ENCODE measurements at regions of chr2 and their contacts with region 1.

Region 1: GRCh38 chr2:88212251-88212790 is 42.2 kb downstream of the THNSL2 start:
- DNase-seq: peak; percentile 60

Region 2: GRCh38 chr2:86617153-86617552 is 1595.2 kb before region 1 on chr2:
- intact Hi-C with region 1: no loop called
- DNase-seq: no peak

Region 3: GRCh38 chr2:88144914-88145497 is 67.3 kb before region 1 on chr2:
- intact Hi-C with region 1: loop called in 1 of 2 experiments (anchors 10 kb)
- DNase-seq: no peak

Measured in posterior vena cava (tissue), 2 donors.